ENCODE measurements at regions of chr12 and their contacts with region 1.

Region 1: GRCh38 chr12:103503977-103504376 is 8.2 kb upstream of the C12orf42 start:
- DNase-seq: peak; percentile 86
- H3K4me3 Mint-ChIP-seq: no peak overlapping the region
- H3K27ac Mint-ChIP-seq: no peak overlapping the region
- H3K4me1 Mint-ChIP-seq: peaks cover 34% of the 10 kb centered on the region
- H3K27me3 Mint-ChIP-seq: peaks cover 13% of the 10 kb centered on the region

Region 2: DNA sequence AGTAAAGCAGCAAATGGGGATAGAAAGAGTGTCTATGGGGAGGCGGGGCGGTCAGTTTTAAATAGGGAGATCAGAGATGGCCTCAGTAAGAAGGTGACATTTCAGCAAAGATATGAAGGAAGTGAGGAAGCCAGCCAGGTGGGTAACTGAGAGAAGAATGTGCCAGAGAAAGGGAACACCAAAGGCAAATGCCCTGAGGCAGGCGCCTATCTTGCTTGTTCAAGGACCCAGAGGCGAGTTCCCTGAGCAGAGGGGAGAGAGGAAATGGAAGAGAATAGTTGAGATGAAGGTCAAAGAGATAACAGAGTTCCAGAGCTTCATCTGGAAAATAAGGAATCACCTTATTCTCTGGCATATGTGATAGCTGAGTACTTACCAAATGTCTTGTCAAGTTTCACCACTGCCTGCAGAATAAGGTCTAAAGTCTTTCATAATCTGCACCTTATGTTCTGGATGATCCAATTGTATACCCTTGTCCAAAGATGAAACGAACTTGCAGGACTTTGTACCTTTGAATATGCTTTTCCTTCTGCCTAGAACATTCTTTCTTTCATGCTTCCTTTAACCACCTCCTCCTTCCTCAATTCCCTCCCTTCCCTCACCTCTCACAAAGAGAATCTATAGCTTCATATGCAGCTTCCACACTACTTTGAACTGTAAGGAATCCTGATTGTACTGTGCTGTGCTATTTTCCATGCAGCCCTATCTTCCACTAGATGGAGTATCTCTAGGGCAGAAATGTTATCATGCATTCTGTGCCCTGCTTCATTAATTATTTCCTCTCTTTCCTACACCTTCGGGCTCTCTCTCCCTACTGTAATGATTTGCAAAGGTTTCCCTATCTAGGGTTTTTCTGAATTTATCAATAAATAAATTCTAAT is 1711.7 kb before region 1 on chr12:
- intact Hi-C with region 1: loop called (anchors 10 kb)
- DNase-seq: no peak
- H3K4me3 Mint-ChIP-seq: no peak overlapping the region
- H3K27ac Mint-ChIP-seq: peak overlapping the region; percentile 72
- H3K4me1 Mint-ChIP-seq: peaks cover 40% of the 10 kb centered on the region
- H3K27me3 Mint-ChIP-seq: no peaks in the 10 kb centered on the region

Region 3: DNA sequence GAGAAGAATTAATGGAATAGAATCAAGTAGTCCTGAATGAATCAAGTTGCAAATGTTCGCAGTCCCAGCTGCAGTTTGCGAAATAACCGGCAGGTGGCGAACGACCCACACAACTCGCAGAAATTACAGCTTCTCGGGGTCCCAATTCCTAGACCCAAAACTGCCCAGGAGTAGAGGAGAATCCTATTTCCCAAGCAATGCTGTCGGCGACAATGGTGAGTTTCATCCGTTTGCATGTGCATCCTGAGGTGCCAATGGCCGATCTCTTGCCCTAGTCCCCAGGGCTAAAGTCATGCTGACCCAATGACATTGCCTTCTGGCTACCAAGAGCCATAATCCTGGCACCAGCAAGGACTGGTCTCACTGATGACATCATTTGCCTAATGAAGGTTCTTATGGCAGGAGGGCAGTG is 555.0 kb before region 1 on chr12:
- intact Hi-C with region 1: loop called (anchors 2 kb)
- DNase-seq: peak; percentile 84
- H3K4me3 Mint-ChIP-seq: no peak overlapping the region
- H3K27ac Mint-ChIP-seq: no peak overlapping the region
- H3K4me1 Mint-ChIP-seq: peaks cover 11% of the 10 kb centered on the region
- H3K27me3 Mint-ChIP-seq: peaks cover 49% of the 10 kb centered on the region

Region 4: DNA sequence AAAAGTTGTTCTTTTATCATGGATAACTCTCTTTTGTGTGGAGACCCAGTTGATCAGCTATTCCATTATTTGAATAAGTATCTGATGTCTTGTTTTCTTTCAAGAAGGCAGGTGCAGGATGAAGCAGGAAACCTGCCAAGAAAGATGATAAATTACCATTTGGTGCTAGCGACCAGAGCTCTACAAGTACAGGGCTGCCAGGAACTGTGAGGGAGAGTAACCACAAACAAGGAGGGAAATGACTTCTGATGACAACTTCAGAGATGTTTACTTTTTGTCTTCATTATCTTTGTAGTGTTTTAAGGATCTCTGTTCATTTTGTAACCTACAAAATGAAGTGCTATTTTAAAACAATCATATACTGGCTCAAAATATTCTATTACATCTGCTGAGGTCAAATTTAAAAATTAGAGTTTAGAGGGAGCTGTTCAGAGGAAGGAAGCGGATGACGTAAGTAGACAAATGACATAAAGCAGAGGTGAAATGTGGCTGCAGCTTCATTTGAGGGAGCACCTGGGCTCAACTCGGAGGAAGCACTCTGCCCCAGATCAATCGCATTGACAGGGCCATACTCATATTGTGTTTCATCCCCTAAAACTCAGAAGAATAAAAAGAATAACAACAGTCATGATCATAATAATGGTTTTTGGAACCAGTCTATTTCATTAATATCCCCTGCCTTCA is 235.0 kb before region 1 on chr12:
- intact Hi-C with region 1: no loop called
- DNase-seq: peak; percentile 68
- H3K4me3 Mint-ChIP-seq: peak overlapping the region; percentile 22
- H3K27ac Mint-ChIP-seq: peak overlapping the region; percentile 7
- H3K4me1 Mint-ChIP-seq: peaks cover 22% of the 10 kb centered on the region
- H3K27me3 Mint-ChIP-seq: no peaks in the 10 kb centered on the region

Region 5: DNA sequence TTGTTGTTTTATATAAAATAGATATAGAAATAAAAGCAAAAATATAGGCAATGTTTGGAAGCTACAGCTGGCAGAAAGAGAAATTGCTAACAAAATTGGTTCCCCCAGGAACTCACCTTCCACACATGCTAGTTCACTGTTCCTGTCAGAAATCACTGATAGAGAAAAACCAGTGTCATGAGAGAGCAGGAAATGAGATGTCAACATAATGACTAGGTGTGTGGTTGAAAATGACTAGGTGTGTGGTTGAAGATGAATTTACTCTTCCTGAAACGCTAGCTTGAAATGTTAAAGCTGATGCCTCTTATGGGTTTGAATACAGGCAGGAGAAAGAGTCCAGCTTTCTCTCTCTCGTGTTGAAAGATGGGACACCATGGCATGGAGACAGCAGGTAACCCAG is 224.5 kb before region 1 on chr12:
- intact Hi-C with region 1: loop called (anchors 1 kb)
- DNase-seq: peak; percentile 75
- H3K4me3 Mint-ChIP-seq: peak overlapping the region; percentile 38
- H3K27ac Mint-ChIP-seq: peak overlapping the region; percentile 34
- H3K4me1 Mint-ChIP-seq: peaks cover 14% of the 10 kb centered on the region
- H3K27me3 Mint-ChIP-seq: peaks cover 5% of the 10 kb centered on the region

Region 6: GRCh38 chr12:103455020-103455763 is 48.8 kb before region 1 on chr12:
- intact Hi-C with region 1: loop called (anchors 2 kb)
- DNase-seq: peak; percentile 77
- H3K4me3 Mint-ChIP-seq: peak overlapping the region; percentile 9
- H3K27ac Mint-ChIP-seq: peak overlapping the region; percentile 63
- H3K4me1 Mint-ChIP-seq: peaks cover 47% of the 10 kb centered on the region
- H3K27me3 Mint-ChIP-seq: no peaks in the 10 kb centered on the region

Region 7: GRCh38 chr12:103482365-103482764 is 21.6 kb before region 1 on chr12:
- intact Hi-C with region 1: no loop called
- DNase-seq: peak; percentile 16
- H3K4me3 Mint-ChIP-seq: peak overlapping the region; percentile 30
- H3K27ac Mint-ChIP-seq: peak overlapping the region; percentile 4
- H3K4me1 Mint-ChIP-seq: peaks cover 6% of the 10 kb centered on the region
- H3K27me3 Mint-ChIP-seq: no peaks in the 10 kb centered on the region